ENCODE measurements at regions of chr1 and their contacts with region 1.

Region 1: GRCh38 chr1:36576118-36576517 is 93.4 kb upstream of the CSF3R start:
- H3K4me3 ChIP-seq: no peak overlapping the region
- H3K27ac ChIP-seq: no peak overlapping the region
- H3K4me1 ChIP-seq: no peaks in the 10 kb centered on the region
- CTCF ChIP-seq: peak; percentile 89

Region 2: DNA sequence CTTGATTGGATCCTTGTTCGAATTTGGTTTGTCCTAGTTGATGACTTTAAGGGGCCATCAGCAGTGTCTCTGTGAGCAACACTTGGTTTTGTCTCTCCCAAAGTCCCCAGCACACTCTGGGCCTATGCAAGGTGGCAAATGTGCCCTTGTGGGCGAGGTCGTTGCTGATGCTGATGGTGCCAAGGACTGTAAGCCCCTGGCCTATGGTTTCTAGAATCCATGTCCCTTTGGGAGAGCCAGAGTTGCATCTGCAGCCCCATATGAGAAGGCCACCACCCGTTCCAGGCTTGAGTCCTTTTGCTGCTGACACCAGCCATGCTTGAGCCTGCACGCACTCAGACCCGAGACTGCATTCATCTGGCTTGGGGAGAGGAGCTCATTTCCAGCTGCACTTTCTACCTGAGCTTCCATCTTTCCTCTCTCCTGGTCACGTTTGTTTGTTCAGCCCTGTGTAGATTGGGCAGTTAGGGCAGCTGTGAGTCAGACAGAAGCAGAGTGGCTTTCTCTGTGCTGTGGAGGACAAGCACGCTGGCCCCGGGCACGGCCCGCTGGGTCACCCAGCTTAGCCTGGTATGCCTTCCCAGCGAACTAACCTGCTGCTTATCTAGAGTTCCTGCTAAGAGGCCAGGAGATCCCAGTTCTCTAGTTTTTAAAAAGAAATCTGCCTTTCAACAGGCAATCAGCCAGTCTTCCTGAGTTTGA is 41.3 kb before region 1 on chr1:
- CTCF ChIA-PET with region 1: interaction called, 10 read pairs
- POLR2A ChIA-PET with region 1: no interaction called
- H3K4me3 ChIP-seq: no peak overlapping the region
- H3K27ac ChIP-seq: no peak overlapping the region
- H3K4me1 ChIP-seq: no peaks in the 10 kb centered on the region
- CTCF ChIP-seq: no peak

Region 3: GRCh38 chr1:36565576-36566501 is 10.3 kb before region 1 on chr1:
- CTCF ChIA-PET with region 1: interaction called, 33 read pairs
- POLR2A ChIA-PET with region 1: no interaction called
- H3K4me3 ChIP-seq: no peak overlapping the region
- H3K27ac ChIP-seq: no peak overlapping the region
- H3K4me1 ChIP-seq: no peaks in the 10 kb centered on the region
- CTCF ChIP-seq: no peak

Region 4: DNA sequence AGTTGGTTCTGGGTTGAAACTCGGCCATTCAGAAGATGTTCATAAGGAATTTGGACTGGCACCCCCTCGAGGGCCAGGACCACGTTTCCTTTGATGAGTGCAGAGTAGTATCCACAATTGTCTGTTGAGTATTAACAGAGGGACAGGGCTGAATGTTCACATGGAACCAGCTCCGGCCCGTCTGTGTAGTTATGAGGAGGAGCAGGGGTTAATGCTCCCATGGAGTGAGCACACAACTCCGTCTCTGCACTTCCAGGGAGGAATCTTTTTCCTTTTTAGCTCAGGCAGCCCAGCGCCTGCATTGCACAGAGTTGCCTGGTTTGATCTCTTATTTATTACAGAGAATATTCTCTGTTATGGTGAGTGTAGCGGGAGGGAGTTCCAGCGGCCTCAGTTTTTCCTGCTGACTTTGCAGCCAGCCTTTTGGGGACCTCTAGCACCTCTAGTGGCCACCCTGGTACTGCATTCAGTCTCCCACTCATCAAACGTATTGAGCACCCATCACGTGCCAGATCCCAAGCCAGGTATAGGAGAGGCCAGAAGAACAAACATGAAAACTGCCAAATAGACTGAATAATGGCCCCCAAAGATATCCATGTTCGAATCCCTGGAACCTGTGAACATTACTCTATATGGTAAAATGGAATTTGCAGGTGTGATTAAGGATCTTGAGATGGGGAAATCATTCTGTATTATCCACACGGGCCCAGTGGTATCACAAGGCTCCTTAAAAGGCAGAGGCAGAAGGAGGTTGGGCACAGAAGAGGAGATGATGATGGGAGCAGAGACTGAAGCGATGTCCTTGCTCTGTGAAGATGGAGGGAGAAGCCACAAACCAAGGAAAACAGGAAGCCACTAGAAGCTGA is 74.3 kb after region 1 on chr1:
- CTCF ChIA-PET with region 1: interaction called, 10 read pairs
- POLR2A ChIA-PET with region 1: no interaction called
- H3K4me3 ChIP-seq: no peak overlapping the region
- H3K27ac ChIP-seq: no peak overlapping the region
- H3K4me1 ChIP-seq: no peaks in the 10 kb centered on the region
- CTCF ChIP-seq: peak; percentile 46

Region 5: DNA sequence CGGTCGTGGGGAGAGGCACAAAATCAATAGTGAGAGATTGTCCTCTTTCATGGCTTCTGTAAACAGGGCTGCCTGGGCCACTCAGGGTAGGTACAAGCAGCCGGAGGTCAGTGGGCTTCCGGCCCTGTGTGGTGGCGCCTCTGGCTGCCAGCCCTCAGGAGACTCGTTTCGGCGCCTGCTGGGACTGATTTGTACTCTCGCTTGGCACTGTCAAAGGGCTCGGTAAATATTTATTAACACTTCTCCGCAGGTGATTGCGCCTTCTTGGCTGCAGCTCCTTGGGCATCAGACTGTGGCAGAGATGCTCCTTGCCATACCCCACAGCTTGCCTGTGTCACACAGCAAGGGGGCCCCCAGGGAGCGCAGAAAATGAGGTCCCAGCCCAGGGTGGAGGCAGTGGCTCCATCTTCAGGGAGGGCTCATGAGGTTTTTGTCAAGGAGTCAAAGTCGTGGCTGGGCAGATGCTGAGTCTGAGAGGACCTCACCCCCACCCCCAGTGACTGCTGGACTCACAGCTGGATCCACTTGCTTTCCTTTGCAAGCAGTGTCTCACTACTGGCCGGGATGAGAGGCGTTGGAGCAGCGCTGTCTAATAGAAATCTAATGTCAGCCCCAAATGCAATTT is 195.7 kb after region 1 on chr1:
- CTCF ChIA-PET with region 1: no interaction called
- POLR2A ChIA-PET with region 1: no interaction called
- H3K4me3 ChIP-seq: no peak overlapping the region
- H3K27ac ChIP-seq: no peak overlapping the region
- H3K4me1 ChIP-seq: no peaks in the 10 kb centered on the region
- CTCF ChIP-seq: no peak

Region 6: GRCh38 chr1:37434292-37434907 is 858.3 kb after region 1 on chr1:
- CTCF ChIA-PET with region 1: interaction called, 10 read pairs
- POLR2A ChIA-PET with region 1: no interaction called
- H3K4me3 ChIP-seq: no peak overlapping the region
- H3K27ac ChIP-seq: no peak overlapping the region
- H3K4me1 ChIP-seq: no peaks in the 10 kb centered on the region
- CTCF ChIP-seq: peak; percentile 76; the same call in 1 of the 2 replicates